IMR-90 (cell line): ENCODE measurements at regions of chr12 and their contacts with region 1.

Region 1: GRCh38 chr12:110600254-110600653 is 13.7 kb upstream of the TCTN1 start:
- DNase-seq: peak; percentile 72
- ATAC-seq: peak; percentile 56; the same call in 1 of the 2 replicates
- H3K4me3 ChIP-seq: no peak overlapping the region
- H3K27ac ChIP-seq: no peak overlapping the region
- H3K4me1 ChIP-seq: no peaks in the 10 kb centered on the region
- H3K27me3 ChIP-seq: no peaks in the 10 kb centered on the region
- CTCF ChIP-seq: peak; percentile 78
- POLR2A ChIP-seq: no peak
- RAD21 ChIP-seq: peak; percentile 80

Region 2: DNA sequence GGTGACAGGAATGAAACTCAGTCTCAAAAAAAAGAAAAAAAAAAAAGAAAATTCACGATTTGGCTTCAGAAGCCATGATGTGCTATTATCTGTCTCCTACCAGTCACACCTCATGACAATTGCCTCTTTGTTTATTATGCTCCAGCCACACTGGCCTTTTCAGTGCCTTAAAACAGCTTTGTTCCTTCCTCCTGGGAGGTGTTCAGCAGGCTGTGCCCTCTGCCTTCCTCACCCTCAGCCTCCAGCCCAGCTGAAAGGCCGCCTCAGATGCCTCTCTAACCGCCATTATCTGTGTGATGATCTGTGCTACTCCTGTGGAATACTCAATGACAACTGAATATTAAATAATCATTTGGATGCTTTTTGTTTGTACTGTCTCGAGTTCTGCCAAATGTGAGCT is 141.5 kb before region 1 on chr12:
- CTCF ChIA-PET with region 1: interaction called, 3 read pairs
- POLR2A ChIA-PET with region 1: no interaction called
- dilution Hi-C with region 1: no loop called
- in situ Hi-C with region 1: loop called (anchors 5 kb)
- intact Hi-C with region 1: no loop called
- DNase-seq: no peak
- ATAC-seq: no peak
- H3K4me3 ChIP-seq: no peak overlapping the region
- H3K27ac ChIP-seq: no peak overlapping the region
- H3K4me1 ChIP-seq: no peaks in the 10 kb centered on the region
- H3K27me3 ChIP-seq: no peaks in the 10 kb centered on the region
- CTCF ChIP-seq: no peak
- POLR2A ChIP-seq: no peak
- RAD21 ChIP-seq: no peak

Region 3: DNA sequence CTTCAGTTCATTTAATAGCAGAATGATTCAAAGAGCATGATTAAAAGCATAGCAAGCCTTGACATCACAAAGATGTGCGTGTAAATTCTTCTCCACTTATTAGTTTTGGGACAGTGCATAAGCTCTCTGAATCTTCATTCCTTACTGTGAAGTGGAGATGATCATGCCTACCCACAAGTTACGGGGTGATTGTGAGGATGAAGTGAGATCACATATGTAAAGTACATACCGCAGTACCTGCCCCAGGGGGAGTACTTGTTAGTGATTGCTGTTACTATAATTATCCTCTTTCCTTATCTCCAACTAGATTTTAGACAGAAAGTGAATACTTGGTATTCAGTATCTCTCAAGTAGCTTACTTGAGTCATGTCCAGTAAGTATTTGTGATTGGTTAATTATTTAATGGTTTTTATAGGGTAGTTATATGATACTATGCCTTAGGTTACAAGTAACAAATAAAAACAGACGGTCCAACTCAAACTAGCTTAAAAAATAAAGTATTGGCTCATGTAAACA is 92.1 kb before region 1 on chr12:
- CTCF ChIA-PET with region 1: interaction called, 13 read pairs
- POLR2A ChIA-PET with region 1: no interaction called
- dilution Hi-C with region 1: no loop called
- in situ Hi-C with region 1: loop called (anchors 5 kb)
- intact Hi-C with region 1: loop called (anchors 1 kb)
- DNase-seq: no peak
- ATAC-seq: no peak
- H3K4me3 ChIP-seq: no peak overlapping the region
- H3K27ac ChIP-seq: no peak overlapping the region
- H3K4me1 ChIP-seq: no peaks in the 10 kb centered on the region
- H3K27me3 ChIP-seq: no peaks in the 10 kb centered on the region
- CTCF ChIP-seq: no peak
- POLR2A ChIP-seq: no peak
- RAD21 ChIP-seq: no peak

Region 4: DNA sequence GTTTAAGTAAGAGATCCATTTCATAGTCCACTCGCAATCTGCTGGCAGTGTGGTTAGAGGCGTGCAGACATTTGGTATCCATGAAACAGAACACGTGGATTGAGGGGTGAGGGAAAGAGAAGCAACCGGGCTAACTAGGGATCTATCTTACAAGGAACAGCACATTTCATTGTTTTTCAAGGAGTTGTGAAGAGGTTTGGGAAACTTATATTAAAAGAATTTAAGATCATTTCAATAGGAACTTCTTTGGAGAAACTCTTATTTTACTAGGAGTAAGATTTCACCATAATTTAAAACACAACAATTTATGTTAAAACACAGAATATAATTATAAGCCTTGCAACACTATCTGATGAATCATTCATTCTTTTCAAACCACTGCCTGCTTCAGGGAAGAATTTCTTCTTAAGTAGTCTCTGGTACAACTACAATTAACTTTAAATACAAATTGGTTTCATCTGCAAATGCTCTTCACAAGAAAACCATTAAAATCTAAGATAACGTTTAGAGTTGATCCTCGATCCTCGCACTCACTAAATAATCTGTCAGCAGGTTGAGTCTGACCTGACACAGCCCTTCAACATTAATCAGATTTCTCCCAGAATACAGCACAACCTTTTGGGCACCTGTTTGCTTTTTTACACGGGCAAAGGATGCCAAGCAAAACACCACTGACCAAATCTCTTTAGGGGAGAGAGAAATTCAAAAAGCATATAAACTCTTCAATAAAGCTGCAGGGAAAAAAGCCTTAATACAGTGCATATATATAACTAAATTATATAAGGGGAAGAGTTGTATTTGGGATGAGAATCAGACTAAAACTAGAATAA is 44.5 kb before region 1 on chr12:
- CTCF ChIA-PET with region 1: interaction called, 5 read pairs
- POLR2A ChIA-PET with region 1: no interaction called
- dilution Hi-C with region 1: no loop called
- in situ Hi-C with region 1: no loop called
- intact Hi-C with region 1: loop called (anchors 1 kb)
- DNase-seq: peak; percentile 80
- ATAC-seq: peak; percentile 80
- H3K4me3 ChIP-seq: no peak overlapping the region; the same call in 1 of the 2 replicates
- H3K27ac ChIP-seq: peak overlapping the region; percentile 96
- H3K4me1 ChIP-seq: peaks cover 8% of the 10 kb centered on the region
- H3K27me3 ChIP-seq: no peaks in the 10 kb centered on the region
- CTCF ChIP-seq: no peak
- POLR2A ChIP-seq: no peak
- RAD21 ChIP-seq: no peak

Region 5: GRCh38 chr12:110860833-110861296 is 260.6 kb after region 1 on chr12:
- CTCF ChIA-PET with region 1: no interaction called
- POLR2A ChIA-PET with region 1: no interaction called
- dilution Hi-C with region 1: no loop called
- in situ Hi-C with region 1: no loop called
- intact Hi-C with region 1: no loop called
- DNase-seq: no peak
- ATAC-seq: no peak
- H3K4me3 ChIP-seq: no peak overlapping the region
- H3K27ac ChIP-seq: no peak overlapping the region
- H3K4me1 ChIP-seq: no peaks in the 10 kb centered on the region
- H3K27me3 ChIP-seq: no peaks in the 10 kb centered on the region
- CTCF ChIP-seq: no peak
- POLR2A ChIP-seq: no peak
- RAD21 ChIP-seq: no peak

Region 6: DNA sequence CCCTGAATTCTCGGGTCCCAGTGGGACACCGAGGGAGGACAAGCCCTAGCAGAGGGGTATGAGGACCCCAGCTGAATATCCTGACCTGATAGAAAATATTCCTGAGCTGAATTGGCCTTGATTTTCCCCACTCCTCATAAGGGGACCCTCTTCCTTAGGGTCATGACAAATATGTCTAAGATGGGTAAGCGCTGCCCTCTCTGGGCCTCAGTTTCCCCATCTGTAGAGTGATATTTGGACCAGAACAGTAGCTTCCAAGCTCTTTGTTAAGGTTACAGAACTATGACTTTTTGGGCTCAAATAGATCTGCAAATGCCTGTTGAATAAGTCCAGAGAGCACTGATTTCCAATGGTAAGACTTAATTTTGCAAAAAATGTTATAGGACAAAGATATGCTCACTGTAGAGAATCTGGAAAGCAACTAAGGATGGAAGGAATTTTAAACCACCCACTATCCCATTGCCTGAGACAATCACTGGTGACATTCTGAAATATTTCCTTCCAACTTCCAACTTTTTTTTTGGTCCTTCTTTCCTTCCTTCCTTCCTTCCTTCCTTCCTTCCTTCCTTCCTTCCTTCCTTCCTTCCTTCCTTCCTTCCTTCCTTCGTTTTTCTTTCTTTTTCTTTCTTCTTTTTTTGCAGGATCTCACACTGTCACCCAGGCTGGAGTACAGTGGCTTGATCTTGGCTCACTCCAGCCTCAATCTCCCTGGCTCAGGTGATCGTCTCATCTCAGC is 288.2 kb after region 1 on chr12:
- CTCF ChIA-PET with region 1: interaction called, 4 read pairs
- POLR2A ChIA-PET with region 1: no interaction called
- dilution Hi-C with region 1: no loop called
- in situ Hi-C with region 1: no loop called
- intact Hi-C with region 1: loop called (anchors 2 kb)
- DNase-seq: no peak
- ATAC-seq: no peak
- H3K4me3 ChIP-seq: no peak overlapping the region
- H3K27ac ChIP-seq: no peak overlapping the region
- H3K4me1 ChIP-seq: no peaks in the 10 kb centered on the region
- H3K27me3 ChIP-seq: no peaks in the 10 kb centered on the region
- CTCF ChIP-seq: no peak
- POLR2A ChIP-seq: no peak
- RAD21 ChIP-seq: no peak